GM23248 (cell line): ENCODE measurements at regions of chr9 and their contacts with region 1.

Region 1: GRCh38 chr9:112355427-112355897 is 22.0 kb upstream of the PTBP3 start:
- DNase-seq: no peak
- H3K4me3 ChIP-seq: no peak overlapping the region
- H3K27ac ChIP-seq: no peak overlapping the region
- H3K4me1 ChIP-seq: peaks cover 7% of the 10 kb centered on the region
- H3K27me3 ChIP-seq: no peaks in the 10 kb centered on the region

Region 2: GRCh38 chr9:111759762-111760639 is 595.5 kb before region 1 on chr9:
- in situ Hi-C with region 1: loop called (anchors 10 kb)
- DNase-seq: peak; percentile 83
- H3K4me3 ChIP-seq: peak overlapping the region; percentile 10; the same call in 1 of the 2 replicates
- H3K27ac ChIP-seq: peak overlapping the region; percentile 49
- H3K4me1 ChIP-seq: peaks cover 34% of the 10 kb centered on the region
- H3K27me3 ChIP-seq: no peaks in the 10 kb centered on the region

Region 3: GRCh38 chr9:112091810-112092209 is 263.7 kb before region 1 on chr9:
- in situ Hi-C with region 1: loop called (anchors 5 kb)
- DNase-seq: peak; percentile 37
- H3K4me3 ChIP-seq: no peak overlapping the region
- H3K27ac ChIP-seq: no peak overlapping the region
- H3K4me1 ChIP-seq: no peaks in the 10 kb centered on the region
- H3K27me3 ChIP-seq: no peaks in the 10 kb centered on the region